Activated CD4-positive, alpha-beta T cell treated with anti-CD3 and anti-CD28 coated beads for 36 hours (primary cell): ENCODE measurements at regions of chr13 and their contacts with region 1.

Region 1: DNA sequence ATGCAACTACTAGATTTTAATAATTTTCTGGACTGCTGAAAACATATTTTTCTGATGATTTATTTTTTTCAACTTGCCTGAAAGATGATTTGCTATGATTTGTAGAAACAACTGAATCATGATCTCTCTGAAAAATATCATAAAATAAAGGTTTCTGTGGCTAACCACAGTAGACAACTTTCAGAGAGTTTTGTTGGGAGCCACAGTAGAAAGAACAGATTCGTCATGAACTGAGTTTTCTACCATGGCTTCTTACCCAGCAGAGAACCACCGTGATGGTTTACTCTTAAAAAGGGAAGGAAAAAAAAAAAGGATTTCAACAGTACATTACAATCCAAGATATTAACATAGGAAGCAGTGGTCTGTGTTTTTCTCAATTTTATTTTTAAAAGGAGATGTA is 18.0 kb downstream of the ZAR1L start:
- DNase-seq: no peak
- ATAC-seq: peak; percentile 36
- H3K4me3 Mint-ChIP-seq: no peak overlapping the region
- H3K27ac Mint-ChIP-seq: no peak overlapping the region
- H3K4me1 Mint-ChIP-seq: peaks cover 9% of the 10 kb centered on the region
- H3K27me3 Mint-ChIP-seq: peaks cover 14% of the 10 kb centered on the region

Region 2: DNA sequence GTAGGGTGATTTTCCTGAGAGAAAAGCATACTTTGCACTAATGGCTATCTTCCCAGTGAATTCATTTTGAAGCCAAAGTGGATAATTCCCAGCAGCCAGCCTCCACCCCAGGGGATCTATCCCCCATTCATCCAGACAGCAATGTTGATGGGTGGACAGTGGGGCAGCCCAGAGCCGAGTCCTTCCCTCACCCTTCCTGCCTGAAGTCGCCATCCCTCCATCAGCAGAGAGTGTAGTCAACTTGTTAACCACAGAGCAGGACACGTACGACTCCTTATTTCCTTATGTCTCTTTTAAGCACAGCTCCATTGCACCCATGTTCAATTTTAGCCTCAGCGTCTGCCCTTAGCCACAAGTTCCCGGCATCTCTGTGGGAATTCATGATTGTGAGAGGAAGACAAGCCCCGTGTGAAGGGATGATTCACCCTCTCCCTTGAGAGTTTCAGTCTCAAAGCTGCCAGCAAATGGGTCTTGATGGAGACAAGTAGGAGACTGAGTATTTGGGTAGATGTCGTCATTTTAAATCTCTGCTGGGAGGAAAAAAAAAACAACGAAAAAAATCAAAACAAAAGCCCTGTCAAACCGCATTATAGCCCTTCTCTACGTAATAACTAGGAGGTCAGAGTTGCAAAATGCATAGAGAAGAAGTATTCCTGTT is 1449.4 kb before region 1 on chr13:
- CTCF ChIA-PET with region 1: no interaction called
- POLR2A ChIA-PET with region 1: no interaction called
- intact Hi-C with region 1: loop called in 1 of 2 experiments (anchors 5 kb)
- DNase-seq: peak; percentile 50
- ATAC-seq: peak; percentile 83
- H3K4me3 Mint-ChIP-seq: no peak overlapping the region
- H3K27ac Mint-ChIP-seq: peak overlapping the region; percentile 41
- H3K4me1 Mint-ChIP-seq: peaks cover 15% of the 10 kb centered on the region
- H3K27me3 Mint-ChIP-seq: peaks cover 5% of the 10 kb centered on the region

Region 3: GRCh38 chr13:32228330-32229041 is 68.7 kb before region 1 on chr13:
- CTCF ChIA-PET with region 1: no interaction called
- POLR2A ChIA-PET with region 1: no interaction called
- intact Hi-C with region 1: no loop called
- DNase-seq: peak; percentile 22
- ATAC-seq: peak; percentile 49
- H3K4me3 Mint-ChIP-seq: no peak overlapping the region
- H3K27ac Mint-ChIP-seq: no peak overlapping the region
- H3K4me1 Mint-ChIP-seq: no peaks in the 10 kb centered on the region
- H3K27me3 Mint-ChIP-seq: no peaks in the 10 kb centered on the region

Region 4: GRCh38 chr13:32267836-32268439 is 29.3 kb before region 1 on chr13:
- CTCF ChIA-PET with region 1: interaction called, 4 read pairs
- POLR2A ChIA-PET with region 1: no interaction called
- intact Hi-C with region 1: loop called (anchors 1 to 2 kb)
- DNase-seq: peak; percentile 76
- ATAC-seq: peak; percentile 63
- H3K4me3 Mint-ChIP-seq: no peak overlapping the region
- H3K27ac Mint-ChIP-seq: no peak overlapping the region
- H3K4me1 Mint-ChIP-seq: peaks cover 9% of the 10 kb centered on the region
- H3K27me3 Mint-ChIP-seq: no peaks in the 10 kb centered on the region

Region 5: DNA sequence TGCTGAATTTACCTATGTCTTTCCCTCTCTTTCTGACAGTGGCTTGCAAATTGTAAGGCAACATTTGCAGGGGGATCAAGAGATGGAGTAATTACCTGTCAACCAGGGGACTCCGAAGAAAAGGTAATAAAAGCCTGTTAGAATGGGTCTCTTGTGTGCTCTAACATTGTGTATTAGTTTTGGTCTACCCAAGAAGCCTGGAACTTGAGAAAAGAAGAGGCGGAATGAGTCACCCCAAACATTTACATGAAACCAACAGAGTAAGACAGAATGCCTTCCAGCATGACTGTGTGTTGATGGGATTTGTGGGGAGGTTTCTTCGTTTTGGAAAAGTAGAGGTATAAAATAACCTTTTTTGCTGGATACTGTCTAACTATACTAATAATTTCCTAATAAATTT is 18.8 kb before region 1 on chr13:
- CTCF ChIA-PET with region 1: no interaction called
- POLR2A ChIA-PET with region 1: no interaction called
- intact Hi-C with region 1: loop called (anchors 2 kb)
- DNase-seq: no peak
- ATAC-seq: peak; percentile 85
- H3K4me3 Mint-ChIP-seq: no peak overlapping the region
- H3K27ac Mint-ChIP-seq: no peak overlapping the region
- H3K4me1 Mint-ChIP-seq: peaks cover 3% of the 10 kb centered on the region
- H3K27me3 Mint-ChIP-seq: no peaks in the 10 kb centered on the region

Region 6: DNA sequence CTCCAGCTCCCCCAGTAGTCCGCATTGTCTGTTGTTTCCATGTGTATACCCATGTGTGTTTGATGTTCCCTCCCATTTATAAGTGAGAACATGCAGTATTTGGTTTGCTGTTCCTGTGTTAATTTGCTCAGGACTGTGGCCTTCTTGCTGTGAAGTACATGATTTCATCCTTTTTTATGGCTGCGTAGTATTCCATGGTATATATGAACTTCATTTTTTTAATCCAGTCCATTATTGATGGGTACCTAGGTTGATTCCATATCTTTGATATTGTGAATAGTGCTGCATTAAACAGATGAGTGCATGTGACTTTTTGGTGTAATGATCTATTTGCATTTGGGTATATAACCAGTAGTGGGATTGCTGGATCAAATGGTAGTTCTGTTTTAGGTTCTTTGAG is 464.3 kb after region 1 on chr13:
- CTCF ChIA-PET with region 1: no interaction called
- POLR2A ChIA-PET with region 1: no interaction called
- intact Hi-C with region 1: no loop called
- DNase-seq: no peak
- ATAC-seq: no peak
- H3K4me3 Mint-ChIP-seq: no peak overlapping the region
- H3K27ac Mint-ChIP-seq: no peak overlapping the region
- H3K4me1 Mint-ChIP-seq: peaks cover 5% of the 10 kb centered on the region
- H3K27me3 Mint-ChIP-seq: no peaks in the 10 kb centered on the region